ENCODE measurements at regions of chr9 and their contacts with region 1.

Region 1: DNA sequence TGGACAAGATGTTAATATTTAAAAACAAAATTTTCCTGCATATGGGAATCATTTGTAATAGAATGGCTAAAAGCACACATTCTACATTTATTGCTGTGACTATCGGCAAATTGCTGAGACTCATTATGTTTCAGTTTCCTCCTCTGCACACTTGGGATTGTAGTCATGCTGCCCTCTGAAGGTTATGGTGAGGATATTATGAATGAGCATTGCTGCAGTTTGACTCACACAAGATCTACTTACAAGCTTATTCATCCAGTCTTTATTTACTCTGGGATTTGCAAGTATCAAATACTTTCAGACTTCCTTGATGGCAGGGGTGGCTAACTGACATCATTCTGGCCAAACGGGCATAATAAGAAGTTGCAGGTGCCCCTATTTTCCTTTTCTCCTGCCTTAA is 9.5 kb upstream of the NFIL3 start:
- DNase-seq: peak in 1 of 5 donors; percentile 31
- H3K4me3 ChIP-seq: no peak overlapping the region
- H3K27ac ChIP-seq: no peak overlapping the region
- H3K4me1 ChIP-seq: no peaks in the 10 kb centered on the region
- H3K27me3 ChIP-seq: no peaks in the 10 kb centered on the region
- CTCF ChIP-seq: peak; percentile 41

Region 2: GRCh38 chr9:90914868-90915483 is 518.2 kb before region 1 on chr9:
- intact Hi-C with region 1: loop called (anchors 5 kb)
- DNase-seq: peak; percentile 81 to 88 (median 85)
- H3K4me3 ChIP-seq: no peak overlapping the region
- H3K27ac ChIP-seq: no peak overlapping the region
- H3K4me1 ChIP-seq: peaks cover 0 to 2% (median 0%) of the 10 kb centered on the region in 3 donors
- H3K27me3 ChIP-seq: no peaks in the 10 kb centered on the region
- CTCF ChIP-seq: peak; percentile 82

Region 3: GRCh38 chr9:91036826-91037510 is 396.2 kb before region 1 on chr9:
- intact Hi-C with region 1: loop called (anchors 10 kb)
- DNase-seq: peak; percentile 79 to 93 (median 87)
- H3K4me3 ChIP-seq: peak overlapping the region in 2 of 3 donors; percentile 2 to 27
- H3K27ac ChIP-seq: peak overlapping the region; percentile 30 to 80
- H3K4me1 ChIP-seq: peaks cover 3 to 18% (median 15%) of the 10 kb centered on the region in 3 donors
- H3K27me3 ChIP-seq: no peaks in the 10 kb centered on the region
- CTCF ChIP-seq: peak; percentile 45

Region 4: GRCh38 chr9:91150998-91151717 is 282.0 kb before region 1 on chr9:
- intact Hi-C with region 1: no loop called
- DNase-seq: no peak
- H3K4me3 ChIP-seq: no peak overlapping the region
- H3K27ac ChIP-seq: no peak overlapping the region
- H3K4me1 ChIP-seq: no peaks in the 10 kb centered on the region
- H3K27me3 ChIP-seq: no peaks in the 10 kb centered on the region
- CTCF ChIP-seq: no peak

Region 5: GRCh38 chr9:91164724-91165520 is 268.3 kb before region 1 on chr9:
- intact Hi-C with region 1: no loop called
- DNase-seq: peak in 2 of 5 donors; percentile 36 to 88
- H3K4me3 ChIP-seq: no peak overlapping the region
- H3K27ac ChIP-seq: no peak overlapping the region
- H3K4me1 ChIP-seq: peaks cover 0 to 13% (median 0%) of the 10 kb centered on the region in 3 donors
- H3K27me3 ChIP-seq: no peaks in the 10 kb centered on the region
- CTCF ChIP-seq: no peak

Region 6: GRCh38 chr9:91522481-91522880 is 89.3 kb after region 1 on chr9:
- intact Hi-C with region 1: no loop called
- DNase-seq: no peak
- H3K4me3 ChIP-seq: no peak overlapping the region
- H3K27ac ChIP-seq: no peak overlapping the region
- H3K4me1 ChIP-seq: no peaks in the 10 kb centered on the region
- H3K27me3 ChIP-seq: no peaks in the 10 kb centered on the region
- CTCF ChIP-seq: no peak